ENCODE measurements at regions of chr2 and their contacts with region 1.

Region 1: GRCh38 chr2:171991027-171991426 is 8.7 kb upstream of the METAP1D start:
- DNase-seq: no peak
- H3K4me3 ChIP-seq: no peak overlapping the region
- H3K27ac ChIP-seq: no peak overlapping the region
- H3K4me1 ChIP-seq: no peaks in the 10 kb centered on the region
- H3K27me3 ChIP-seq: no peaks in the 10 kb centered on the region
- CTCF ChIP-seq: no peak

Region 2: GRCh38 chr2:171909266-171909665 is 81.8 kb before region 1 on chr2:
- CTCF ChIA-PET with region 1: no interaction called
- POLR2A ChIA-PET with region 1: interaction called, 22 read pairs
- intact Hi-C with region 1: no loop called
- DNase-seq: no peak
- H3K4me3 ChIP-seq: no peak overlapping the region
- H3K27ac ChIP-seq: no peak overlapping the region
- H3K4me1 ChIP-seq: no peaks in the 10 kb centered on the region
- H3K27me3 ChIP-seq: no peaks in the 10 kb centered on the region
- CTCF ChIP-seq: no peak